ENCODE measurements at regions of chr16 and their contacts with region 1.

Region 1: GRCh38 chr16:68310761-68311511 is at the starts of genes PRMT7 and SLC7A6OS:
- DNase-seq: peak; percentile 88 to 90
- ATAC-seq: peak; percentile 100
- H3K4me3 ChIP-seq: peak within 1 kb of the TSS; percentile 68 to 98 (median 91)
- H3K27ac ChIP-seq: peak within 1 kb of the TSS; percentile 3 to 90 (median 84)
- H3K4me1 ChIP-seq: peaks cover 12 to 45% (median 34%) of the 10 kb centered on the region in 9 donors
- H3K27me3 ChIP-seq: no peaks in the 10 kb centered on the region
- CTCF ChIP-seq: peak in 4 of 9 donors; percentile 31 to 67 (median 56)
- total RNA-seq, gene PRMT7: 22.0 to 39.2 (median 30.7) TPM
- total RNA-seq, gene SLC7A6OS: 9.9 to 14.4 (median 12.8) TPM

Region 2: DNA sequence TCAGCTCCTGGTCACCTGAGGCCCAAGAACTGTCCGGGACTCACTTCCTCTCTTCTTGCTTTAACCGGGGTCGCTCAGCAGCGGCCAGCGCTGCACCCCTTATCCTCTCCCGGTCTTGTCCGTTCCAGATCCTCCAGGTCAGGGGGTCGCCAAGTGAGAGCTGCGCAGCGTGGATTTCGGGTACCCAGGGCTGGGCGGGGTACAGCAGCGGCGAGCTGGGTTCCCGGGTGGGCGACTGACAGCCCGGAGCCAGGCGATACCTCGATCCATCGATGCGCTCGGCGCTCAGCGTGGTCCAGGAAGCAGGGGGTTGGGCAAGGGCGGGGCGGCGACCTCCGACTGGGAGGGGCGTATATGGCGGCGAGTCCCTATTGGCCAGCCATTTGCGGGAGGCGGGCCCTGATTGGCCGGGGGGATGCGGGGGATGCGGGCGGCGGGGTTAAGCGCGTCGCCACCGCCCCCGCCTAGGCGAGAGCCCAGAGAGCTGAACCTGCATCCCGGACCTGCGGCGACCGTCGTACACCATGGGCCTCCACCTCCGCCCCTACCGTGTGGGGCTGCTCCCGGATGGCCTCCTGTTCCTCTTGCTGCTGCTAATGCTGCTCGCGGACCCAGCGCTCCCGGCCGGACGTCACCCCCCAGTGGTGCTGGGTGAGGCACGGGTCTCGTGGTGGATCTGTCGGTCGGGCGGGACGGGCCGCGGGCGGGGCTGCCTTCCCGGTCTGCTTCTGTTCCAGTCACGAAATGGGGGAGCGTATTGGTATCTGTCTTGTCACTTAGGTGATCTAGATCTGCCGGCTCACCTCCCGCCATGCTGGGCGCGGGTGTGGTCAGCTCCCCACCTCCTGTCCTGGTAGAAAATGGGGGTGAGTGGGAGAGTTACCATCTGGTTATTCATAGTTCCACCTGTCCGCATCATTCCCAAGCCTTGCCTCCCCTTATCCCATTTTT is 65.8 kb before region 1 on chr16 and contains the start of gene PLA2G15:
- intact Hi-C with region 1: no loop called
- DNase-seq: peak; percentile 99
- ATAC-seq: peak; percentile 93 to 98 (median 96)
- H3K4me3 ChIP-seq: peak within 1 kb of the TSS; percentile 77 to 100 (median 87)
- H3K27ac ChIP-seq: peak within 1 kb of the TSS; percentile 8 to 95 (median 86)
- H3K4me1 ChIP-seq: peaks cover 10 to 56% (median 49%) of the 10 kb centered on the region in 9 donors
- H3K27me3 ChIP-seq: no peaks in the 10 kb centered on the region
- CTCF ChIP-seq: peak in 1 of 9 donors; percentile 6
- total RNA-seq, gene PLA2G15: 31.0 to 62.1 (median 44.0) TPM

Region 3: DNA sequence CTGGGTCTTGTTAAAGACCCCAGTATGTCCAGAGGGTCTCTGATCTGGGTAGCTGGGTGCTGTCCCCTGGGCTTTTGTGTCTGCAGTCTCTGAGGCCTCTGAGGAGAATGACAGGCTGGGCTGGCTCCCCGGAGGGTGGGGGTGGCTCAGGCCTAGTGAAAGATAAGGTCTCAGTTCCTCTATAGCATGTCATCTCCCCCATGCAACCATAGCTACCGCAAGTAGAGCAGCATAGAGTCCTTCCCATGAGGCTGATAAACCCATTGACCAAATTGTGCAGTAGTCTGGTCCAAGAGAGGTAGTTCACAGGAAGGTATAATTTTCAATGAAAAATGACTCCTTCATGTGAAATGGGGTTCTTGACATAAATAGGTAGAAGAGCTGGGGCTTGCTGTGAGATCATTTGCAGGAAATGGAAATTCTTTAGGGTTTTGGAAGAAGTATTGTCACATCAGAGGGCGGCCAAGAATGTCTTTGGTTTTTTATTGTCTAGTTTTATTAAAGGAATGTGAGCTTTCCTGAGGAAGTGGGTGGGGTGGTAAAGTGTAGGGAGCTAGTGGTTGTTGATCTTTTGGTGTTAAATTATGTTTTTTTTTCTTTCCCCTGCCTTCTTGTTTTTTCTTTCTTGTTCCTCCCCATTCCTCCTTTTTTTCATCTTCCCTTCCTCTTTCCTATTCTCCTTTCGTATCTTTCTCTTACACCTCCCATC is 21.2 kb before region 1 on chr16:
- intact Hi-C with region 1: loop called in 1 of 10 experiments (anchors 2 kb)
- DNase-seq: no peak
- ATAC-seq: peak in 3 of 8 donors; percentile 29 to 43 (median 38)
- H3K4me3 ChIP-seq: no peak overlapping the region
- H3K27ac ChIP-seq: peak overlapping the region; percentile 56 to 88 (median 78)
- H3K4me1 ChIP-seq: peaks cover 35 to 75% (median 67%) of the 10 kb centered on the region in 9 donors
- H3K27me3 ChIP-seq: no peaks in the 10 kb centered on the region
- CTCF ChIP-seq: no peak

Region 4: DNA sequence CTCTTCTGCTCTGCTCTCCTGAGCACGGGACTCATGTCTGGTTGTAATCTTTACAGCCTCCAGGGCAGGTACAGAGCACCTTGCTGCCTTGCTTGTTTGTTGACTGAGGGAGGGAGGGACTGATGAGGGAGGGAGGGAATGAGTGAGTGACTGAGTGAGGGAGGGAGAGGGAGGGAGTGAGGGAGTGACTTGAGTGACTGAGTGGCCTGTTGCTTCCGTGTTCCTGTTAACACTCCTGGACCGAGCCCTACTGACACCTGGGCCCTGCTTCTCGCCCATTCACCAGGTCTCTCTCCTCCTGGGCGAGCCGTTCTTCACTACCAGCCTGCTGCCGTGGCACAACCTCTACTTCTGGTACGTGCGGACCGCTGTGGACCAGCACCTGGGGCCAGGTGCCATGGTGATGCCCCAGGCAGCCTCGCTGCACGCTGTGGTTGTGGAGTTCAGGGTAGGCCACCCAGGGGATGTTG is 41.1 kb after region 1 on chr16:
- intact Hi-C with region 1: no loop called
- DNase-seq: no peak
- ATAC-seq: no peak
- H3K4me3 ChIP-seq: no peak overlapping the region
- H3K27ac ChIP-seq: no peak overlapping the region
- H3K4me1 ChIP-seq: peaks cover 0 to 14% (median 5%) of the 10 kb centered on the region in 9 donors
- H3K27me3 ChIP-seq: no peaks in the 10 kb centered on the region
- CTCF ChIP-seq: no peak